IMR-90 (cell line): ENCODE measurements at regions of chr2 and their contacts with region 1.

Region 1: GRCh38 chr2:208150956-208151355 is 5.0 kb upstream of the CRYGB start:
- DNase-seq: no peak
- ATAC-seq: no peak
- H3K4me3 ChIP-seq: no peak overlapping the region
- H3K27ac ChIP-seq: no peak overlapping the region
- H3K4me1 ChIP-seq: no peaks in the 10 kb centered on the region
- H3K27me3 ChIP-seq: 0 out of 2 replicates have a peak, but pooled peaks cover 1% of the 10 kb centered on the region
- CTCF ChIP-seq: no peak
- POLR2A ChIP-seq: no peak
- RAD21 ChIP-seq: no peak

Region 2: DNA sequence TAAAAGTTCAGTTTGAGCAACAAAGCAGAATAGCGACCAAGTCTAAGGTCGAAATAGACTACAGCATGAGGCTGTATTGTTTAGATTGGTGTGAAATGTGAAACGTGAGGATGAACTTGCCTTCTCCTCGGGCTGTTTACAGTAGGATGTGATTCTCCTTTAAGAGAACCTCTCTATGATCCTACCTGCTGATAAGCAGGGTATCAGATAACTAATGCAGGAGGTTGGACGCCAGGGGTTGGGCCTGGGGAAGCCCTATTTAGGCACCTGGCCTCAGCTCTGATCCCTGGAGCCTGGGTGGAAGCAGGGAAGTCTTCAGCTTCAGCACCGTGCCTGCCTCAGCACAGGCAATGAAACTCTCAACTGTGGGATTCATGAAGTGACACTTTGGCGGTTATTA is 38.0 kb before region 1 on chr2:
- CTCF ChIA-PET with region 1: no interaction called
- POLR2A ChIA-PET with region 1: no interaction called
- dilution Hi-C with region 1: no loop called
- in situ Hi-C with region 1: no loop called
- intact Hi-C with region 1: loop called (anchors 1 kb)
- DNase-seq: no peak
- ATAC-seq: no peak
- H3K4me3 ChIP-seq: no peak overlapping the region
- H3K27ac ChIP-seq: no peak overlapping the region
- H3K4me1 ChIP-seq: no peaks in the 10 kb centered on the region
- H3K27me3 ChIP-seq: peaks cover 17% of the 10 kb centered on the region
- CTCF ChIP-seq: no peak
- POLR2A ChIP-seq: no peak
- RAD21 ChIP-seq: no peak